ENCODE measurements at regions of chr2 and their contacts with region 1.

Region 1: DNA sequence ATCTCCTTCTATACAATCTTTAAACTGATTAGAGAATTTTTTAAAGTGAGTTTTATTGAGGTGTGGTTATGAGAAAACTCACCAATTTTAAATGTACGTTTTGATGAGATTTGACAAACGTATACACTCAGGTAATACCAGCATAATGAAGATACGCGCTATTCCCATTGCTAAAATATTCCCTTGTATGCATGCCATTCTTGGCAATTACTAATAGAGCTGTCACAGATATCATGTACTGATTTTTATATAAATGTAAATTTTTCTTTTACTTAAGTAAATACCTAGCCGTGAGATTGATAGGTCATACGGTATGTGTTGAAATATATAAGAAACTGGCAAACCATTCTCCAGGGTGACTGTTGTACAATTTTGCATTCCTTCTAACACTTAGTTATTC is 384.7 kb downstream of the PTH2R start:
- DNase-seq: no peak
- ATAC-seq: no peak
- H3K4me3 ChIP-seq: no peak overlapping the region
- H3K27ac ChIP-seq: no peak overlapping the region
- H3K4me1 ChIP-seq: no peaks in the 10 kb centered on the region
- H3K27me3 ChIP-seq: no peaks in the 10 kb centered on the region
- CTCF ChIP-seq: no peak

Region 2: GRCh38 chr2:208807756-208808155 is 16.5 kb after region 1 on chr2:
- intact Hi-C with region 1: loop called in 1 of 10 experiments (anchors 2 kb)
- DNase-seq: no peak
- ATAC-seq: no peak
- H3K4me3 ChIP-seq: no peak overlapping the region
- H3K27ac ChIP-seq: no peak overlapping the region
- H3K4me1 ChIP-seq: no peaks in the 10 kb centered on the region
- H3K27me3 ChIP-seq: no peaks in the 10 kb centered on the region
- CTCF ChIP-seq: no peak